Panc1 (cell line): ENCODE measurements at regions of chr15 and their contacts with region 1.

Region 1: DNA sequence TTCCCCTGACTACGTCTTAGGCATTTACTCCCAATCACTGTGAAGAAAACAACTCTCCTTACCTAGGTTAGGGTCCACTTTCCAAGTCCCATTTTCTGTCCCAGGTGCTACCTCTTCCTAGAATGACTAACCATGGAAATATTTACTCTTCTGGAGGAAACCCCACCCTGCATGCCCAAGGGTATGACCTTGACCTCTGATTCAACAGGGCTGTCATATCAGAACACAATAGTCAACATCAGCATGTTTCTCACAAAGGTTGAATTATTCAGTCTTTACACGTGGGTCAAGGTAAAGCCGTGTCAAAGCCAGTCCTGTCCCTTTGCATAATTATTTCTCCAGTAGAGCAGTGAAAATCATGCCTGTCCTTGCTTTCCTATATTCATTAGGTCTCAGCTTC is 4.3 kb upstream of the FRMD5 start:
- DNase-seq: no peak
- ATAC-seq: no peak
- H3K4me3 ChIP-seq: no peak overlapping the region
- H3K27ac ChIP-seq: no peak overlapping the region
- H3K4me1 ChIP-seq: no peaks in the 10 kb centered on the region
- H3K27me3 ChIP-seq: no peaks in the 10 kb centered on the region
- CTCF ChIP-seq: no peak

Region 2: DNA sequence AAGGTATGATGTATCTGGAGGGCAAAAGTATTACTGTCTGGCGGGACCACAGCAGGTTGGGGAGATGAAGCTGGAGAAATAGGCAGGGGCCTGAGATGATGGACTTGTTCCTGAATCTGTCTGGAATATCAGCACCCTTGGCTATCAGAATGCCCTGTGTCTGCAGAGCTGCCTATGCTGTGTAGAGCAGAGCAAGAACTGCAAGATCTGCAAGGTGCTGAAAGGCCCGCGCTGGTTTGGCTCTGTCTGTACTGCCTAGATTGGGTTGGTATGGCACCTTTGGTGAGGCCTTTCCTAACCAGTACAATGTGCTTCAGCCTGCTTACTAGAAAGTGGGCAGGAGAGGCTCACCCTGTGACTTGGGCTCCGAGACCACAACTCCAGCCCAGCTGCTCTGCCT is 275.8 kb before region 1 on chr15:
- CTCF ChIA-PET with region 1: no interaction called
- POLR2A ChIA-PET with region 1: interaction called, 13 read pairs
- in situ Hi-C with region 1: no loop called
- intact Hi-C with region 1: no loop called
- DNase-seq: no peak
- ATAC-seq: no peak
- H3K4me3 ChIP-seq: no peak overlapping the region
- H3K27ac ChIP-seq: no peak overlapping the region
- H3K4me1 ChIP-seq: no peaks in the 10 kb centered on the region
- H3K27me3 ChIP-seq: no peaks in the 10 kb centered on the region
- CTCF ChIP-seq: no peak